Caco-2 (cell line): ENCODE measurements at regions of chr20 and their contacts with region 1.

Region 1: DNA sequence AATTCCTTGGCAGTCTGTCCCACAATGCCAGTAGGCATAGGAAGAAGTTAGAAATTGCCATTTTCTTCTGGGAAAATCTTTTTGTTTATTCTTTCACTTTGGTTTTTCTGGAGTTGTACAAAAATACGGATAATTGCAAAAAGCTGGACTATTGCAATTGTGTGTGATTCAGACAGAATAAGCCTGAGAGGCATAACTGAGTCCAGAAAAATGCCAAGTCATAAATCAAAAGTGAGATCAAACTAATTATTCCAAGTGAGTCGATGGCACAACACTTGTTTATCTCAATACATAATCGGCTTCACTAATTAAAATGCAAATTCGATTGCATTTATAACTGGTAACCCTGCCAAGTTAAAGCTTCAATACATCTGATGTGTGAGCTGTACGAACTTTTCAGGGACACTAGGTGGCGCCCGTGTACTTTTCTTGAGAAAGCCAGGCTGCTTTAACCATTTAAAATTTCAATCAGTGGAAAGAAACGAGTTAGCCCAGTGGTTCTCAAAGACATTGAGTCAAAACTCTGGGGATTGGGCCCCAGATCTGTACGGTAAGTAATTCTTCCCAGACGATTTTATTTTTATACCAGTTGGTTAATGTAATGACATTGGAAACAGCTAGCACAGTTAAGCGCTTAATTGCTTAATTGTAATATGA is 102.6 kb downstream of the LAMP5 start:
- DNase-seq: peak; percentile 47 to 60
- H3K4me3 ChIP-seq: no peak overlapping the region
- H3K4me3 Mint-ChIP-seq: no peak overlapping the region
- H3K27ac Mint-ChIP-seq: no peak overlapping the region
- H3K4me1 ChIP-seq: no peaks in the 10 kb centered on the region
- H3K4me1 Mint-ChIP-seq: peaks cover 15% of the 10 kb centered on the region
- H3K27me3 ChIP-seq: no peaks in the 10 kb centered on the region; the same call in 1 of the 2 replicates
- H3K27me3 Mint-ChIP-seq: peaks cover 17% of the 10 kb centered on the region
- CTCF ChIP-seq: peak; percentile 82 to 92

Region 2: GRCh38 chr20:9595763-9596162 is 21.2 kb before region 1 on chr20:
- CTCF ChIA-PET with region 1: no interaction called
- POLR2A ChIA-PET with region 1: no interaction called
- intact Hi-C with region 1: no loop called
- DNase-seq: no peak
- H3K4me3 ChIP-seq: no peak overlapping the region
- H3K4me3 Mint-ChIP-seq: no peak overlapping the region
- H3K27ac Mint-ChIP-seq: no peak overlapping the region
- H3K4me1 ChIP-seq: peaks cover 6% of the 10 kb centered on the region; the same call in 1 of the 2 replicates
- H3K4me1 Mint-ChIP-seq: no peaks in the 10 kb centered on the region
- H3K27me3 ChIP-seq: no peaks in the 10 kb centered on the region; the same call in 1 of the 2 replicates
- H3K27me3 Mint-ChIP-seq: no peaks in the 10 kb centered on the region
- CTCF ChIP-seq: no peak

Region 3: GRCh38 chr20:9815632-9816031 is 198.7 kb after region 1 on chr20:
- CTCF ChIA-PET with region 1: no interaction called
- POLR2A ChIA-PET with region 1: no interaction called
- intact Hi-C with region 1: loop called (anchors 10 kb)
- DNase-seq: no peak
- H3K4me3 ChIP-seq: no peak overlapping the region
- H3K4me3 Mint-ChIP-seq: no peak overlapping the region
- H3K27ac Mint-ChIP-seq: no peak overlapping the region
- H3K4me1 ChIP-seq: no peaks in the 10 kb centered on the region
- H3K4me1 Mint-ChIP-seq: no peaks in the 10 kb centered on the region
- H3K27me3 ChIP-seq: no peaks in the 10 kb centered on the region
- H3K27me3 Mint-ChIP-seq: peaks cover 2% of the 10 kb centered on the region
- CTCF ChIP-seq: no peak

Region 4: DNA sequence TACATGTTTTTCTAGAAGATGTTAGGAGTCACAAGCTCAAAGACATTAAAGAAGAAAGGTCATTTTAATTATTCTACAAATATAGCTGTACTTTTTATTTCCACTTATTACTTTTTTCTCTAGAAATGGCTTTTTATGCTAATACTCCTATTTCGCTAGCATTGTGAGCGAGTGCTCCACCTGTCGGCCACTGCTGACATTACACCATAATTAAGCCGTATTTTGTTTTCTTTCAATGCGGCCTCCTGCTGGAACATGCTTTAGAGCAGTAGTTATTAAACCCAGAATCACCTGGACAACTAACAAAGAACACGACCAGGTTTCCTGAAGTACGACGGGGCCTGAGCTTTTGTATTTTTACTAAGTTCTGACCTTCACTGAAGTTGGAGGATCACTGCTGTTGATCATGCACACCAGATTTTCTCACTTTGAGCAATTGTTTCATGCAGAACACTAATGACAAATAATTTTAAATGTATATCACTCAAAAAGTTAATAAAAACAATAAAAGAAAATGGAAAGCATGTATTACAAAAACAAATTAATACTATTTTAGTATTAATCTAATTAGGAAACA is 296.0 kb after region 1 on chr20:
- CTCF ChIA-PET with region 1: interaction called, 22 read pairs
- POLR2A ChIA-PET with region 1: no interaction called
- intact Hi-C with region 1: loop called (anchors 1 kb)
- DNase-seq: peak; percentile 40 to 57
- H3K4me3 ChIP-seq: no peak overlapping the region
- H3K4me3 Mint-ChIP-seq: no peak overlapping the region
- H3K27ac Mint-ChIP-seq: no peak overlapping the region
- H3K4me1 ChIP-seq: no peaks in the 10 kb centered on the region
- H3K4me1 Mint-ChIP-seq: no peaks in the 10 kb centered on the region
- H3K27me3 ChIP-seq: no peaks in the 10 kb centered on the region; the same call in 1 of the 2 replicates
- H3K27me3 Mint-ChIP-seq: peaks cover 20% of the 10 kb centered on the region
- CTCF ChIP-seq: peak; percentile 74 to 83

Region 5: DNA sequence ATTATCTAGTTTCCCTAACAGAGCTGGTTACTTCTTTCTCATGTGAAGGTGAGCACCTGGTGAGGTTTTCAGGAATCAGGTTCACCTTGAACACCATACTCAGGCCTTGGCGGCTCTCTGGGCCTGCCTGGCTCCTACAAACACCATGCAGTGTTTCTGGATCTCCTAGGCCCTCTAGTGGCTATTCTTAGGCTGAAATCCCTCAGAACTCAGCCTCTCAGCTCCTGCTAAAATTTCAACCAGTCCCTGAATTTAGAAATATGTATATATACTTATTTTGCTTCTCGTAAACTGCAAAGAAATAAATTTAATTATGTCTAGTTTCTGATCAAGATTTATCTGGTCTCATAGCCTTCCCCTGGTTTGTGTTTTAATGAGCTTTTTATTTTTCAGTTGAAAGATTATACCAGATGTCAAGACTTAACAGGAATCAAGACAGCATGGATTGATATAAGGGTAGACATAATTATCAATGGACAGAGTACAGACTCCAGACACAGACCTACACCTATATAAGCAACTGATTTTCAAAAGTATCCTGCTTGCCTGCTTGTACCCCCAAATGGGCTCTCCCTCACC is 473.7 kb after region 1 on chr20:
- CTCF ChIA-PET with region 1: interaction called, 18 read pairs
- POLR2A ChIA-PET with region 1: no interaction called
- intact Hi-C with region 1: loop called (anchors 1 kb)
- DNase-seq: peak; percentile 48 to 60
- H3K4me3 ChIP-seq: no peak overlapping the region
- H3K4me3 Mint-ChIP-seq: no peak overlapping the region
- H3K27ac Mint-ChIP-seq: no peak overlapping the region
- H3K4me1 ChIP-seq: no peaks in the 10 kb centered on the region
- H3K4me1 Mint-ChIP-seq: no peaks in the 10 kb centered on the region
- H3K27me3 ChIP-seq: no peaks in the 10 kb centered on the region
- H3K27me3 Mint-ChIP-seq: peaks cover 6% of the 10 kb centered on the region
- CTCF ChIP-seq: peak; percentile 70 to 86

Region 6: GRCh38 chr20:10412591-10413408 is 795.8 kb after region 1 on chr20:
- CTCF ChIA-PET with region 1: no interaction called
- POLR2A ChIA-PET with region 1: no interaction called
- intact Hi-C with region 1: loop called (anchors 5 kb)
- DNase-seq: no peak
- H3K4me3 ChIP-seq: no peak overlapping the region
- H3K4me3 Mint-ChIP-seq: no peak overlapping the region
- H3K27ac Mint-ChIP-seq: no peak overlapping the region
- H3K4me1 ChIP-seq: no peaks in the 10 kb centered on the region
- H3K4me1 Mint-ChIP-seq: no peaks in the 10 kb centered on the region
- H3K27me3 ChIP-seq: no peaks in the 10 kb centered on the region
- H3K27me3 Mint-ChIP-seq: no peaks in the 10 kb centered on the region
- CTCF ChIP-seq: peak in 1 of 2 experiments; percentile 20